Endothelial cell of umbilical vein (primary cell): ENCODE measurements at regions of chr20 and their contacts with region 1.

Region 1: GRCh38 chr20:45095753-45096371 is 5.1 kb downstream of the KCNS1 start:
- DNase-seq: peak; percentile 52
- H3K4me3 ChIP-seq: no peak overlapping the region
- H3K27ac ChIP-seq: no peak overlapping the region
- H3K4me1 ChIP-seq: peaks cover under 1% of the 10 kb centered on the region
- H3K27me3 ChIP-seq: peaks cover 23 to 30% of the 10 kb centered on the region in 2 experiments
- CTCF ChIP-seq: peak; percentile 53 to 79
- POLR2A ChIP-seq: no peak

Region 2: DNA sequence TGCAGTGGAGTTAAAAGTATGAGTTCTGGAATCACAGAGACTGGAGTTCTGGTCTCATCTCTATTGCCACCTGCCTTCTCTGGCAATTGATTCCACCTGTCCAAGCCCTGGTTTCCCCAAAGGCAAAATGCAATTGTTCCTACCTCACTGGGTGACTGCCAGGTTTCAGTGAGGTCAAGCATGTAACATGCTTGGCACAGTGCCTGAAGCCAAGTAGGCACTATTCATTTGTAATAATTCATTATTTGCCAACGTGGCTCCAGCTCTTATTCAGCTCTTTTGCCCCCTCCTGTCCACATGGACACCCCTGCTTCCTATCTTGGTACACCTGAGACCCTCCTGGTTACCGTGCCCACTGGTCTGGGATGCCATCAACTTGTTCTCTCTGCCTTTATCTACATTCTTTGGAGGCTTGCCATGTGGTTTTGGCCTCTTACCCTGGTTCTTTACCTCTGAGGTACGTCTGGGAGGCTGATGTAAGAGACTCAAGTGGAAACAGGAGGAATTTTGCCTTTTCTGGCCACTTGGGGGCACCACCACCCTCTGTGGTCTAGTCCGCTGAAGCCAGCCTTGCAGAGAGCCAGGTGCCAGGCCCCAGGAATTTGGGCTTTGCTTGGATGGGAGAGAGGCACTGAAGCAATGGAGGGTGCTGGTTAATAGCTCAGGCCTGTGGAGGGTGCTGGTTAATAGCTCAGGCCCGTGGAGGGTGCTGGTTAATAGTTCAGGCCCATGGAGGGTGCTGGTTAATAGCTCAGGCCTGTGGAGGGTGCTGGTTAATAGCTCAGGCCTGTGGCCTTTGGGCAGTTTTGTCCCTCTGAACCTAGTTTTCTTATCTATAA is 348.5 kb before region 1 on chr20:
- CTCF ChIA-PET with region 1: interaction called, 5 read pairs
- POLR2A ChIA-PET with region 1: no interaction called
- dilution Hi-C with region 1: no loop called
- intact Hi-C with region 1: loop called (anchors 5 kb)
- DNase-seq: peak; percentile 63
- H3K4me3 ChIP-seq: no peak overlapping the region
- H3K27ac ChIP-seq: no peak overlapping the region
- H3K4me1 ChIP-seq: peaks cover 4% of the 10 kb centered on the region
- H3K27me3 ChIP-seq: peaks cover 11 to 15% of the 10 kb centered on the region in 2 experiments
- CTCF ChIP-seq: peak; percentile 70 to 79
- POLR2A ChIP-seq: no peak

Region 3: DNA sequence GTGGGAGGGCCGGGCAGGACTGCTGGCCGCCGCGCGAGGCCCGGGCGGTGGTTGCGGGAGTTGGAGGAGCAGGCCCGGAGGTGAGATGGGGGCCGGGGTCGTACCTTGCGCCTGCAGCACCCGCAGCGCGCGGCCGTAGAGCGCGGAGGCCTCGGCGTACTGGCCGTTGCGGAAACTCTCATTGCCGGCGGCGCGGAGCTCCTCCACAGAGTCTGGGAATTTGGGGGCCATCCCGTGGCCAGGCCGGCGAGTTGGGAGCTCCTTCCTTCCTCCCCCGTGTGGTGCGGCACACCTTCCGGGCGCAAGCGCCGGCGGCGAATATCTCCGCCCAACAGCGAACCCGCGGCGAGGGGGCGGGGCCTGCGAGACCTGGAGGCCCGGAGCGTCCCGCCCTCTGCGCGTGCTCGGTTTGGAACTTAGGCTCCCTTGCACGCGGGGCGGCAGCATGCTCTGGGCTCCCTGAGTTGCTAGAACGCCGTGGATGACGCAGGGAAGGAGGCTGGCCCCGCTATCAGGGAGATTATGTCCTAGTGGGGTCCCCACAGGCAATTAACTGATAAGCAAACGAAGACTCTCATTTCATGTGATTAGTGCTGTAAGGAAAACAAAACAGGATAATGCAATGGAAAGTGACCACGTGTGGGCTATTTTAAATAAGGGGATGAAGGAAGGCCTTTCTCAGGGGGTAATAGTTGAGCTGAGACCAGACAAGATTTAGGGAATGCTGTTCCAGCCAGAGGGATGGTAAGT is 135.6 kb before region 1 on chr20 and contains the start of gene TOMM34:
- CTCF ChIA-PET with region 1: interaction called, 5 read pairs
- POLR2A ChIA-PET with region 1: no interaction called
- dilution Hi-C with region 1: no loop called
- intact Hi-C with region 1: loop called (anchors 2 kb)
- DNase-seq: peak; percentile 90
- H3K4me3 ChIP-seq: peak within 1 kb of the TSS; percentile 90 to 96 (median 95)
- H3K27ac ChIP-seq: peak within 1 kb of the TSS; percentile 68
- H3K4me1 ChIP-seq: peaks cover 28% of the 10 kb centered on the region
- H3K27me3 ChIP-seq: no peaks in the 10 kb centered on the region
- CTCF ChIP-seq: no peak
- POLR2A ChIP-seq: peak; percentile 85
- total RNA-seq, gene TOMM34: 37.0 and 44.2 TPM in 2 replicates

Region 4: DNA sequence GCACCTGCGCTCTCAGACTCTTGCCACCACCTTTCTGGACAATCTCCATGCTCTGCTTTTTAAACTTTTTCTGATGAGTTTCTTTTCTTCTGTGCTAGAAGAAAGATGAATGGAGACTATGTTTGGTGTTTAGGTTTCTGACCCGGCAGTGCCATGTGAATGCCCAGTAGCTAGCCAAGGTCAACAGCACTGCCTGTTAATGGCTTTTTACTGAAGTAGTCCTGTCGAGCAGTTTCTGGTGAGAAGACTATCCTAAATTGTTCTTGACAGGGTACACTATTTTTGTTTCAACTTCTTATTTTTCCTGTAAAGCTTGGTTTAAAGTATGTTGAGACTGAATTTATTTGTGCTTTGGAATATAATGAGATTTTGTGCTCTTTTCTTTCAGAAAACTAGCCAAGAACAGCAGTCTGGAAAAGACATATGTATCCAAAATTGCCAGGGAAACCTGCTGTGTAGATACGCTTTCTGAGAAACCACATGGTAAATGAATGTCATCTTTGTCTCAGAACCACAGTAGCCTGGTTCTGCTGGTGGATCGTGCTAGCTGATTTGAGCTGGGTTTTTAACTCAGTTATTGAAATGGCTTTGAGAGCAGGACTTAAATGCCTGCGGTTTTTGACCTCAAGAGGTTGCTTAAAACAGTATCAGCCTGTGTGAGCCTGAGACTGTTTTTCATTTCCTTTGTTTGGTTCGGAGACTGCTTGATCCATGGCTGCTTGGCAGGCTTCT is 43.0 kb before region 1 on chr20:
- CTCF ChIA-PET with region 1: interaction called, 25 read pairs
- POLR2A ChIA-PET with region 1: no interaction called
- dilution Hi-C with region 1: no loop called
- intact Hi-C with region 1: no loop called
- DNase-seq: no peak
- H3K4me3 ChIP-seq: no peak overlapping the region
- H3K27ac ChIP-seq: no peak overlapping the region
- H3K4me1 ChIP-seq: peaks cover 12% of the 10 kb centered on the region
- H3K27me3 ChIP-seq: no peaks in the 10 kb centered on the region
- CTCF ChIP-seq: no peak
- POLR2A ChIP-seq: no peak

Region 5: DNA sequence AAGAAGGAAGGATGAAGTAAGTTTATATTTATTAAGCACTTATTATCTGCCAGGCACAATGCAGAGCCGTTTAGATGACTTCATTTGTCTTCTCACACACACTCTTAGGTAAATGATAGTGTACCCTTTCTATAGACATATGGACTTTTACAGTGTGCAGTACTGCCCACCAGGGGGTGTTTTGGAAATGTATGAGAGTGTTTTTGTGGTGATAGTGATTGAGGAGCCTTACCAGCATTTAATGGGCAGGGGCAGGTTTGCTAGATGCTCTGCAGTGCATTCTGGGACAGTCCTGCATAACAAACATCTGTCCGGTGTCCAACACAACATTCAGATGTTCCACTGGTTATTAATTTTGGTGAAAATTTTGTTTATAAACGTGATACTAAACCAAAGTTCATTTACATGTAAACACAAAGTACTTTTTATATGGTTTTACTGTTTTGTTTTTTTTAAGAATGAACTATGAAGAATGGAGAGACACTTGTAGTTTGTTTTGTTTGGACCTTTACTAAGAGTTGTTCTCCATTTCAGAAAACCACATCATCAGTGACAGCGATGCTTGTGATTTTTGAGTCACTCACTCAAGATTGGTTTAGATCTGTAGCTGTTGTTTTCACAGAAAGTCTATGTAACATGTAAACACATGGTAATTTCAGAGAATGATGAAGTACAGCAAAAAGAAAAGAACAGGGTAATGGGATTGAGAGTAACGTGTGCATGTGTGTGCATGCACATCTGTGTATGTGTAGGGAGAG is 14.8 kb before region 1 on chr20:
- CTCF ChIA-PET with region 1: interaction called, 16 read pairs
- POLR2A ChIA-PET with region 1: no interaction called
- dilution Hi-C with region 1: no loop called
- intact Hi-C with region 1: loop called (anchors 2 kb)
- DNase-seq: peak; percentile 24
- H3K4me3 ChIP-seq: no peak overlapping the region
- H3K27ac ChIP-seq: no peak overlapping the region
- H3K4me1 ChIP-seq: peaks cover 2% of the 10 kb centered on the region
- H3K27me3 ChIP-seq: no peaks in the 10 kb centered on the region
- CTCF ChIP-seq: peak; percentile 23 to 50
- POLR2A ChIP-seq: no peak

Region 6: GRCh38 chr20:45174434-45175364 is 78.8 kb after region 1 on chr20 and contains the start of gene PI3:
- CTCF ChIA-PET with region 1: no interaction called
- POLR2A ChIA-PET with region 1: no interaction called
- dilution Hi-C with region 1: no loop called
- intact Hi-C with region 1: no loop called
- DNase-seq: no peak
- H3K4me3 ChIP-seq: no peak within 1 kb of the TSS
- H3K27ac ChIP-seq: no peak within 1 kb of the TSS
- H3K4me1 ChIP-seq: no peaks in the 10 kb centered on the region
- H3K27me3 ChIP-seq: peaks cover 4 to 9% of the 10 kb centered on the region in 2 experiments
- CTCF ChIP-seq: no peak
- POLR2A ChIP-seq: no peak
- total RNA-seq, gene PI3: not detected in 2 replicates